MCF 10A (cell line): ENCODE measurements at regions of chr12 and their contacts with region 1.

Region 1: DNA sequence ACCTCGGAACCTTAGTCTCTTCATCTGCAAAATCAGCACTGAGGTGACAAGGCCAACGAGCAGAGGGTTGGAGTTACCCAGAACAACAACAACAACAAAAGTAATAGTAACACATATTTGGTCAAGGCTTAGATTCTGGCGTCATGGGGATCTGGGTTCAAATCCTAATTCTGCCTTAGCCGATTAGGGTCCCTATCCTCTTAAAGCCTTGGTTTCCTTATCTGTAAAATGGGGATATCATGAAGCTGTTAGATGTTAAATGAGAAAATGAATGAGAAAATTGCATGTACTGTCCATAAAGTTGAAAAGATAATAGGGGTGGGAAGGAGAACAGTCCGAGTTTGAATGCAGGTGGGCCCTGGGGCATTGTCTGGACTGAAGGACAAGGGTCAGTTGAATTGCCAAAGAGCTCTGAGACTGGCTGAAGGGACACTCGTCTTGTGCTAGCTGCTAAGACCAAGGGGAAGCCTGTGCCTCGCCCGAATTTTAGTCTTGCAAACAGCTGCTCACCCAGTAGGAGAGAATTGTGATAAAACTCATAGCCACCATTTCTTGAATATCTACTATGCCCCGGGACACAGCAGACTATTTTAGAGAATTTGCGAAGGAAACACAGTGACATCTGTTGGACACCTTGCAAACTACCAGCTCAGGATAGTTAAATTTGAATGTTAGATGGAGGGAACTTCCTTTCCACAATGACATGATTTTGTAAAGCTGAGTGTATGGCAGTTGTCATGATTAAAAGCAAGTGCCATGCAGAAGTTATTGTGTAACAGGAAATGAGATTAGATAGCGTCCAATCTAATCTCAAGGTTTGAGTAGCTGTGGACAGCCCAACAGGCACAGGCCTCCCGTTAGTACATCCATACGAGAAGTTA is 6.8 kb upstream of the HNF1A start:
- DNase-seq: peak; percentile 69
- H3K4me3 Mint-ChIP-seq: no peak overlapping the region
- H3K27ac Mint-ChIP-seq: no peak overlapping the region
- H3K4me1 Mint-ChIP-seq: peaks cover 8% of the 10 kb centered on the region
- H3K27me3 Mint-ChIP-seq: no peaks in the 10 kb centered on the region
- CTCF ChIP-seq: peak; percentile 73

Region 2: DNA sequence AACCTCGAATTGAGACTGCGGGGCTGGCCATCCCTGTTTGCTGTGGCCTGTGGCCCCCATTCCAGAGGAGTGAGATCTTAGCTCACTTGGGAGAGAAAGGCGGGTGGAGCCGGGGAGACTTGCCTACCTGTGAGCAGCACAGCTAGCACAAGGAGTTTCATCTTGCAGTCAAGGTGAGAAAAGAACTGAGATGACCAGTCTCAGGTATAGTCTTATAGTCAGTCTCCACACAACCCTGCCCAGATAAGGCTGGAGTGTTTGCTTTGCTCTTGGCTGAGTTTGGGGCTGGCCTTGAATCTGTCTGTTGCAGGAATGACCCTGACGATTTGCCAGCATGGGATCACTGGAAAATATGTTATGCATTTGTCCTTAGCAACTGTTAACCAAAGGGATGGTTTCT is 643.9 kb before region 1 on chr12 and contains the start of gene PLA2G1B:
- CTCF ChIA-PET with region 1: interaction called, 4 read pairs
- POLR2A ChIA-PET with region 1: no interaction called
- intact Hi-C with region 1: loop called (anchors 5 kb)
- DNase-seq: no peak
- H3K4me3 Mint-ChIP-seq: no peak within 1 kb of the TSS
- H3K27ac Mint-ChIP-seq: no peak within 1 kb of the TSS
- H3K4me1 Mint-ChIP-seq: peaks cover 11% of the 10 kb centered on the region
- H3K27me3 Mint-ChIP-seq: no peaks in the 10 kb centered on the region
- CTCF ChIP-seq: no peak
- total RNA-seq, gene PLA2G1B: not detected in 2 replicates

Region 3: GRCh38 chr12:120649442-120650232 is 321.9 kb before region 1 on chr12:
- CTCF ChIA-PET with region 1: interaction called, 75 read pairs
- POLR2A ChIA-PET with region 1: interaction called, 3 read pairs
- intact Hi-C with region 1: loop called (anchors 1 kb)
- DNase-seq: no peak
- H3K4me3 Mint-ChIP-seq: peak overlapping the region; percentile 15
- H3K27ac Mint-ChIP-seq: no peak overlapping the region
- H3K4me1 Mint-ChIP-seq: peaks cover 14% of the 10 kb centered on the region
- H3K27me3 Mint-ChIP-seq: peaks cover 49% of the 10 kb centered on the region
- CTCF ChIP-seq: no peak

Region 4: DNA sequence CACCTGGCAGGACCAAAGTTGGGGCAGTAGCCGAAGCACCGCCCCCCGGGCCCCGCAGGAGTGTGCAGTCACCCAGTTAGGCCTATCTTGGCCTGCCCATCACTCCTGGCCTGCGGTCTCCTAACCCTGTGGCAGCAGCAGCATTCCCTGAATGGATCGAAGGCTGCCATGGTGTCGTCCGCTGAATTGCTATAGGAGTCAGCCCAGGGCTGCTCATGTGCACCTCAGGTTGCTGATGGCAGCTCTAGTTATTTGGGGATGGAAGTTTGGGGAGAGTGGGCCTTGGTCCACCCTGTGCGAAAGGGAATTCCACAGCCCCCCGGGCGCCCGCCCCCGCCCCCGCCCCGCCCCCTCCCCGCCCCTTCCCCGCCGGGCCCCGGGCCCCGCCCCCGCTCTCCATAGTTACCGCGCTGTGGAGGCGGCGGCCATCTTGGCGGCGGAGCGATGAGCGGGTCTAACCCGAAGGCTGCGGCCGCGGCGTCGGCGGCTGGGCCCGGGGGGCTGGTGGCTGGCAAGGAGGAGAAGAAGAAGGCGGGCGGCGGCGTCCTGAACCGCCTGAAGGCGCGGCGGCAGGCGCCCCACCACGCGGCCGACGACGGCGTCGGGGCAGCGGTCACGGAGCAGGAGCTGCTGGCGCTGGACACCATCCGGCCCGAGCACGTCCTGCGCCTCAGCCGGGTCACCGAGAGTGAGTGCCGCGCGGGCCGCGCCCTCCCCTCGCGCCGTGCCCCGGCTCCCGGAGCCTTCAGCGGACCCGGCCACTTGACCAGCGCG is 261.3 kb before region 1 on chr12 and contains the start of gene UNC119B:
- CTCF ChIA-PET with region 1: interaction called, 4 read pairs
- POLR2A ChIA-PET with region 1: no interaction called
- intact Hi-C with region 1: loop called (anchors 2 kb)
- DNase-seq: peak; percentile 49
- H3K4me3 Mint-ChIP-seq: peak within 1 kb of the TSS; percentile 89
- H3K27ac Mint-ChIP-seq: peak within 1 kb of the TSS; percentile 55
- H3K4me1 Mint-ChIP-seq: peaks cover 16% of the 10 kb centered on the region
- H3K27me3 Mint-ChIP-seq: no peaks in the 10 kb centered on the region
- CTCF ChIP-seq: no peak
- total RNA-seq, gene UNC119B: 31.0 and 34.7 TPM in 2 replicates

Region 5: GRCh38 chr12:120797677-120798642 is 173.6 kb before region 1 on chr12:
- CTCF ChIA-PET with region 1: interaction called, 10 read pairs
- POLR2A ChIA-PET with region 1: no interaction called
- intact Hi-C with region 1: no loop called
- DNase-seq: no peak
- H3K4me3 Mint-ChIP-seq: no peak overlapping the region
- H3K27ac Mint-ChIP-seq: no peak overlapping the region
- H3K4me1 Mint-ChIP-seq: peaks cover 6% of the 10 kb centered on the region
- H3K27me3 Mint-ChIP-seq: no peaks in the 10 kb centered on the region
- CTCF ChIP-seq: no peak

Region 6: DNA sequence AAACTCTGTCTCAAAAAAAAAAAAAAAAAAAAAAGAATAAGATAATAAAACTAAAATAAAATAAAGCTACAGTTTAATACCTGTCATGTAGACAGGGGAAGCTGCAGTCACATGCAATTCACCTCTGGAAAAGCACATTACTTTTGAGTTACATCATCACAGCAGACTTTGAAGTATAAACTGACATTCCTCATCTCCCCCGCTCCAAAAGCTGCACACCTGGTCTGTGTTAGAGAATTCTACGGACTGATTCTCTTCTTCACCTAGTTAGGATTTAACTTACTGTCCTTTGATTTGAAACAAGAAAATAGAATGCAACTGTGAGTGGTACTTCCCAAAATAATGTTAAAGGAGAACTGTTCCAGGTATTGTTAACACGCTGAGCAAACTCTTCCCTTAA is 92.4 kb before region 1 on chr12:
- CTCF ChIA-PET with region 1: interaction called, 10 read pairs
- POLR2A ChIA-PET with region 1: no interaction called
- intact Hi-C with region 1: no loop called
- DNase-seq: no peak
- H3K4me3 Mint-ChIP-seq: no peak overlapping the region
- H3K27ac Mint-ChIP-seq: no peak overlapping the region
- H3K4me1 Mint-ChIP-seq: peaks cover 18% of the 10 kb centered on the region
- H3K27me3 Mint-ChIP-seq: no peaks in the 10 kb centered on the region
- CTCF ChIP-seq: no peak